Endothelial cell of umbilical vein (primary cell): ENCODE measurements at regions of chr22 and their contacts with region 1.

Region 1: GRCh38 chr22:37043828-37044538 is 7.6 kb upstream of the KCTD17 start:
- DNase-seq: peak; percentile 44
- H3K4me3 ChIP-seq: no peak overlapping the region
- H3K27ac ChIP-seq: no peak overlapping the region
- H3K4me1 ChIP-seq: peaks cover 16% of the 10 kb centered on the region
- H3K27me3 ChIP-seq: no peaks in the 10 kb centered on the region
- CTCF ChIP-seq: peak; percentile 68 to 83
- POLR2A ChIP-seq: no peak

Region 2: DNA sequence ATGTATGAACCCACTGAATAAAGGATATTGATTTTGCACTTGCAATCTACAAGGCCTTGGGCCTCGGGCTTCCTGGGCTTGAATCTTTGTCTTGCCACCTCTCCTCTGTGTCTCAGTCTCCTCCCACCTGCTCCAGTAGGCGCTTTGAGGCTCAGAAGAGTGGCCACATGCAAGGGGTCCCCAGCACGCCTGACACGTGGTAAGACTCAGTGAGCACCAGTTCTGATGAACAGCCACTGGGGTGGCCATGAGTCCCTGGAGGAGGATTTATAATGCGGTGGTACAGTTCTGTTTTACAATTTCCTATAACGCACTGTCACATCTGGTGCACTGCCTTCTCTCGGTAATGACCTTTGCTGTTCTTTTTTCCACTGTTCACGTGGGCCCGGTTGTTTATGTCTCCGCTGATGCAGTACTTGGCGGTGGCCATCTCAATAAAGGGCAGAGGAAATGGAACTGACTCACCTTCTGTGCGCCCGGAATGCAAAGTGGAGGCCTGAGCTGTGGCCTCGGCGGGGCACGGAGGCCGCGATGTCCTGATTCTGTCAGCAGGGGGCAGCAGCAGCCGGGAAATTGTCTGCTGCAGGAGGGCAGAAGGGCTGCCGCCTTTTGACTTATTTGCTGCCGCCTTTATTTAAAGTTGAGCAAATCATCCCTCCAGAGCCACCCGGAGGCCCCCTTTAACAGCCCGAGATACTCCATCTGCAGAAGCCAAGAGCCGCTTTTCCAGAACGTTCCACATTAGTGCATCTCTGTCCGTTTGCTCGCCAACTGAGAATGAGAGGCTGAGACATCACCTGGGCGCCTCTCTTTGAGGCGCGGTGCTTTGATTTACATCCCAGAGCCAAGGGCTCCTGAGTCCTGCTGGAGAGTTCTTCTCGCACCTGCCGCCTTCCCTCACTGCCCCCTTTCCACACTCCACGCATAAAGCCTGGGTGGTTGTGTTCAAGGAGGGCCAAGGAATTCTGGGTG is 262.0 kb before region 1 on chr22:
- CTCF ChIA-PET with region 1: interaction called, 6 read pairs
- POLR2A ChIA-PET with region 1: no interaction called
- dilution Hi-C with region 1: no loop called
- intact Hi-C with region 1: loop called (anchors 2 kb)
- DNase-seq: peak; percentile 95
- H3K4me3 ChIP-seq: no peak overlapping the region
- H3K27ac ChIP-seq: peak overlapping the region; percentile 62
- H3K4me1 ChIP-seq: peaks cover 4% of the 10 kb centered on the region
- H3K27me3 ChIP-seq: peaks cover 3 to 8% of the 10 kb centered on the region in 2 experiments
- CTCF ChIP-seq: peak; percentile 93 to 98
- POLR2A ChIP-seq: no peak

Region 3: DNA sequence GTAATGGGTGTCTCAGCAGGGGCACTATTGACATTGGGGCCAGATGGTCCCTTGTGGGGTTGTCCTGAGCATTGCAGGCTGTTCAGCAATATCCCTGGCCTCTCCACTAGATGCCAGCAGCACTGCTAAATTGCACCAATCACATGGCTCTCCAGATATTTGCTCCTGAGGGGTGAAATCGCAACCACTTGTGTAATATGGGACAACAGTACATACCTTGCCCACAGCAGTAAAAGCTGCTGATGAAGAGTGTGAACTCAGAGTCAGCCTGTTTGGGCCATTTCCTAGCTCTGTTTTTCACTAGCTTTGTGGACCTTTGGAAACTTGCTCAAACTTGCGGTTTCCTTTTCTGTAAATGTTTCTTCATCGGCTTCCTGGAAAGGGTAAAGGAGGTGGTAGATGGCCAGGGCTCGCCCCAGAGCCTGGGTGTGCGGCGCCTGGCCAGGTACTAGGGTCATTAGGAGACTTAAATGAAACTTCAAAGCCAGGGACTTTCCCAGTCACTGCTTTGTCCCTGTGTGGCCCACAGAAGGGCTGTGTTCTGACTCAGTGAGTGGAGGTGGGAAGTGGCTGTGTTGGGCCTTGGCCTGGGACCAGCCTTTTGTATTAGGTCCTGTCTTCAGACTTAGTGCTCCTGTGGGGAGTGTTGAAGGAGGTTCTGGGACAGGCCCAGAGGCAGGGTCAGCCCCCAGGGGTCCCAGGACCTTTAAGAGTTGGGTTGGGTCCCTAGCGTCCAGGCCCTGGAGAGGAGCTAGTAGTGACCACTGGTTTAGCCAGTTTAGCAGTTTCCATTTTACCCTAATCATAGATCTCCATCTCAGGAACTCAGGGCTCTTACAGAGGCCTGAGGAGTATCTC is 170.1 kb before region 1 on chr22:
- CTCF ChIA-PET with region 1: no interaction called
- POLR2A ChIA-PET with region 1: no interaction called
- dilution Hi-C with region 1: no loop called
- intact Hi-C with region 1: loop called (anchors 2 kb)
- DNase-seq: peak; percentile 82
- H3K4me3 ChIP-seq: no peak overlapping the region
- H3K27ac ChIP-seq: peak overlapping the region; percentile 82
- H3K4me1 ChIP-seq: peaks cover 26% of the 10 kb centered on the region
- H3K27me3 ChIP-seq: peaks cover 0 to 2% of the 10 kb centered on the region in 2 experiments
- CTCF ChIP-seq: peak; percentile 71 to 74
- POLR2A ChIP-seq: no peak

Region 4: GRCh38 chr22:36986242-36986821 is 57.7 kb before region 1 on chr22:
- CTCF ChIA-PET with region 1: interaction called, 3 read pairs
- POLR2A ChIA-PET with region 1: no interaction called
- dilution Hi-C with region 1: no loop called
- intact Hi-C with region 1: loop called (anchors 1 kb)
- DNase-seq: peak; percentile 13
- H3K4me3 ChIP-seq: no peak overlapping the region
- H3K27ac ChIP-seq: no peak overlapping the region
- H3K4me1 ChIP-seq: no peaks in the 10 kb centered on the region
- H3K27me3 ChIP-seq: peaks cover 9 to 12% of the 10 kb centered on the region in 2 experiments
- CTCF ChIP-seq: peak; percentile 63 to 86
- POLR2A ChIP-seq: no peak

Region 5: GRCh38 chr22:37019309-37020125 is 24.5 kb before region 1 on chr22 and contains the starts of genes MPST and TST:
- CTCF ChIA-PET with region 1: interaction called, 38 read pairs
- POLR2A ChIA-PET with region 1: no interaction called
- dilution Hi-C with region 1: no loop called
- intact Hi-C with region 1: loop called (anchors 2 kb)
- DNase-seq: peak; percentile 69
- H3K4me3 ChIP-seq: peak within 1 kb of the TSS; percentile 74 to 89 (median 86)
- H3K27ac ChIP-seq: peak within 1 kb of the TSS; percentile 91
- H3K4me1 ChIP-seq: peaks cover 12% of the 10 kb centered on the region
- H3K27me3 ChIP-seq: no peaks in the 10 kb centered on the region
- CTCF ChIP-seq: peak in 1 of 2 donors; percentile 8
- POLR2A ChIP-seq: peak; percentile 45
- total RNA-seq, gene MPST: 87.3 and 93.2 TPM in 2 replicates
- total RNA-seq, gene TST: 38.0 and 39.2 TPM in 2 replicates

Region 6: GRCh38 chr22:37032546-37033460 is 11.2 kb before region 1 on chr22:
- CTCF ChIA-PET with region 1: interaction called, 27 read pairs
- POLR2A ChIA-PET with region 1: interaction called, 3 read pairs
- dilution Hi-C with region 1: no loop called
- intact Hi-C with region 1: no loop called
- DNase-seq: no peak
- H3K4me3 ChIP-seq: no peak overlapping the region
- H3K27ac ChIP-seq: no peak overlapping the region
- H3K4me1 ChIP-seq: peaks cover 9% of the 10 kb centered on the region
- H3K27me3 ChIP-seq: no peaks in the 10 kb centered on the region
- CTCF ChIP-seq: no peak
- POLR2A ChIP-seq: no peak